Activated CD4-positive, alpha-beta T cell treated with anti-CD3 and anti-CD28 coated beads, Interleukin-2, amount 10 ng/mL, durations not matched to agents 7 days and 5 days (primary cell): ENCODE measurements at regions of chr21 and their contacts with region 1.

Region 1: GRCh38 chr21:32940079-32941014 is 85.4 kb upstream of the OLIG2 start:
- DNase-seq: peak; percentile 60
- H3K4me3 Mint-ChIP-seq: no peak overlapping the region
- H3K27ac Mint-ChIP-seq: no peak overlapping the region
- H3K4me1 Mint-ChIP-seq: peaks cover 5% of the 10 kb centered on the region
- H3K27me3 Mint-ChIP-seq: peaks cover 3% of the 10 kb centered on the region

Region 2: GRCh38 chr21:32900814-32901213 is 39.5 kb before region 1 on chr21:
- CTCF ChIA-PET with region 1: no interaction called
- POLR2A ChIA-PET with region 1: no interaction called
- DNase-seq: no peak
- H3K4me3 Mint-ChIP-seq: no peak overlapping the region
- H3K27ac Mint-ChIP-seq: no peak overlapping the region
- H3K4me1 Mint-ChIP-seq: no peaks in the 10 kb centered on the region
- H3K27me3 Mint-ChIP-seq: peaks cover 10% of the 10 kb centered on the region

Region 3: GRCh38 chr21:32929633-32930038 is 10.7 kb before region 1 on chr21:
- CTCF ChIA-PET with region 1: interaction called, 15 read pairs
- POLR2A ChIA-PET with region 1: no interaction called
- DNase-seq: no peak
- H3K4me3 Mint-ChIP-seq: no peak overlapping the region
- H3K27ac Mint-ChIP-seq: no peak overlapping the region
- H3K4me1 Mint-ChIP-seq: peaks cover 38% of the 10 kb centered on the region
- H3K27me3 Mint-ChIP-seq: no peaks in the 10 kb centered on the region

Region 4: GRCh38 chr21:33212159-33212851 is 272.0 kb after region 1 on chr21:
- CTCF ChIA-PET with region 1: no interaction called
- POLR2A ChIA-PET with region 1: no interaction called
- DNase-seq: peak; percentile 29
- H3K4me3 Mint-ChIP-seq: no peak overlapping the region
- H3K27ac Mint-ChIP-seq: peak overlapping the region; percentile 81
- H3K4me1 Mint-ChIP-seq: peaks cover 66% of the 10 kb centered on the region
- H3K27me3 Mint-ChIP-seq: no peaks in the 10 kb centered on the region